Posterior vena cava (tissue), 2 donors: ENCODE measurements at regions of chr3 and their contacts with region 1.

Region 1: DNA sequence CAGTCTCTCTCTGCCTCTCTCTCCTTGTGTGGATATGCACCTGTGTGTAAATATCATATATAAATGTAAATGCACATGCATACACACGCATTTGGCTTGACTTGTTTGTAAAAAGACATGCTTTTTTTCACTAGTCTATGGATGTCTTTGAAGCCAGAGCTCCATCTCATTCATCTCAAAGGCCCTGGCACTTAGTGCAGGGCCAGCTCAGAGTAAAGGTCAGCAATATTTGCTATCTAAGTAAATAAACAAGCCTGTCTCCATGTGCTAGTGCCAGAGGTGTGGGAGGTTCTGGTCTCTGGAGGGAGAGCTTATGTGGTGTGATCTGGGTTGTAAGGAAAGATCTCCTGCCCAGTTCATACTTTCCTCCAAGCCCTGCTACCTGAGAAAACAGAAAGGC is 5.6 kb downstream of the CLSTN2 start:
- DNase-seq: no peak

Region 2: DNA sequence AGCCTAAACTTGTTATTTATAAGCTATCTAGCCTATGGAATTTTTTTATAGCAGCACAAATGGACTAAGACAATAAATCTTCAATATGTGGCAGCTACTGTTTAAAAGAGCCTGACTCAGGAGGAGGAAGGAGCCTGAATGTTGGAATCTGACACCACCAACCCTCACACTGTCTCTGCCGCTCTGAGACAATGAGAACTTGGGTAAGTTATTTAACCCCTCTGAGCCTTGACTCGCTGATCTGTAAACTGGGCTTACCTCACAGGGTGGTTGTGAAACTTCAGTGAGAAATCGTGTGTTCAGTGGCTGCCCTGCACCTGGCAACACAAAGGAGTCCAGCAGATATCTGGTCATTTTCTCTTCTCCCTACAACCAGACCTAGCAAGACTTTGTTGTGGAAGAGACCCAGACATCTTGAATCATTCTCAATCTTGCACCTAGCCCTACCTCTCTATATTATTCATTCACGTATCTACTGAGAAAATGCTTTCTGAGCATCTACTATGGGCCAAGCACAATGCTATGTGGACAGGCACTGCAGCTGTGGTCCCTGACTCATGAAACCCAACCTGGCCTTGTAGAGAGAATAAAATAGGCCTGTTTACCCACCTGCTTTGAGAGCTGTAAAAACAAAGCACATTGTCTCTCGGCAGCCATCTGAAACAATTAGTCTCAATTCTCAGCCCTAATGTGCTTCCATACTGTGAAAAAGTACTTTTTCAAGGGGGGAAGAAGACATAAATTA is 919.1 kb after region 1 on chr3:
- intact Hi-C with region 1: loop called in 1 of 2 experiments (anchors 10 kb)
- DNase-seq: no peak